Caki2 (cell line): ENCODE measurements at regions of chr12 and their contacts with region 1.

Region 1: GRCh38 chr12:123232807-123233543 is at the starts of genes MPHOSPH9 and MTRFR:
- DNase-seq: peak; percentile 100
- total RNA-seq, gene MPHOSPH9: 31.5 and 34.0 TPM in 2 replicates
- total RNA-seq, gene MTRFR: 11.6 and 27.7 TPM in 2 replicates

Region 2: GRCh38 chr12:123043536-123044001 is 189.4 kb before region 1 on chr12:
- in situ Hi-C with region 1: loop called (anchors 25 kb)
- DNase-seq: peak; percentile 81

Region 3: DNA sequence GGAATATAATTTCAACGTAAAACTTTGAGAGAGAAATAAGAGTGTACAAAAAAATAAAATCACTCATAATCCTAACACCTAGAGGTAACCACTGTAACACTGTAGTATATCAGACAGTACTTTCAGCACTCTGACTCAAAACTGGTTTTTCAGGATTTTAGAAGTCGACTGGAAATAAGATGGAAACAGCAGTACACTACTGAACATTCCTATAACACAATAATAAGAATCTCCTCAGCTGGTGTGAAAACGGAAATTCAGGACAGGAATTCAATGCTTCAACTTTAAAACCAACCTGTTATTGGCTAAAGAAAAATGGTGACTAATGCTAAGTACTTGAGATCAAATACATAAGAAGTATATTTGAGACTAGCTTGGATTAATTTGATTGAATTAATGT is 69.7 kb before region 1 on chr12:
- in situ Hi-C with region 1: no loop called
- DNase-seq: no peak